AG04450 (cell line): ENCODE measurements at regions of chr4 and their contacts with region 1.

Region 1: DNA sequence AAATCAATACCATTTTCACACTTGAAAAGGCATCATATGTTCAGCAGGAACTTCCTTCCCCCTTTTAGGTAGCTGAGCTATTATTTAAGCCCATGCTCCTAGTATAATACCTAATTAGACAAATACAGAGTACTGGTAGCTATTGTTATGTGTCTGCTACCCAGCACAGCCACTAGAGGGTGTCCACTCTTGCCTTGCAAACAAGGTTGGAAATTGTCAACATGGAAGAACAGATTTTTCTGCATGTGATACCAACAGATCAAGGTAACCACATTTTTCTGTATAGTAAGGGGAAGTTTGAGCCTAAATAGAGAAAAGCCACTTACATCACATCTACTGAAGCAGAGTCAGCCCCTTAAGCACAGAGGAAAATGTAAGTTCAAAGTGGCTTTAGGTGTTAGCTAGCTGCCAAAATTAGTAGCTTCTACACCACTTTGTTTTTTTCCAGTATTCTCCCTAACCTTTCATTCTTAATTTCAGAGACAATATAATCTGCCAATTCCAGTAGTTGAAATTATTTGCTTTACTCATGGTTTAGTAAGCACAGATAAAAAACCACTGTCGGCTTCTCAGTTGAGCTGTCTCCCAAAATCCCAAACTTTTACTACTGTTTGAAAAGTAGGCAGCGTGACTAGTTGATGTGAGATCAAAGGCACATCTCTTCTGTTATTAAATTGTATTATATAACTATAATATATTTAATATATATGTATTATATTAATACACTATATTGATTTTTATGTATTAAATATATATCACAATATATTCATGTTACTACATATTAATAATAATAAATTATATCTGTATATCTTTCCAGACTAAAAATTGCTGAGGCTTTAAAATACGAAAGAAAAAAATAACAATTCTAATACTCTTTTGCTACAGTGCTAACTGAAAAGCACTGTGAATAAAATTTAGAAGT is 38.2 kb downstream of the EDNRA start:
- DNase-seq: peak; percentile 48
- H3K4me3 ChIP-seq: no peak overlapping the region
- H3K27ac ChIP-seq: no peak overlapping the region
- H3K27me3 ChIP-seq: no peaks in the 10 kb centered on the region
- CTCF ChIP-seq: peak; percentile 98

Region 2: DNA sequence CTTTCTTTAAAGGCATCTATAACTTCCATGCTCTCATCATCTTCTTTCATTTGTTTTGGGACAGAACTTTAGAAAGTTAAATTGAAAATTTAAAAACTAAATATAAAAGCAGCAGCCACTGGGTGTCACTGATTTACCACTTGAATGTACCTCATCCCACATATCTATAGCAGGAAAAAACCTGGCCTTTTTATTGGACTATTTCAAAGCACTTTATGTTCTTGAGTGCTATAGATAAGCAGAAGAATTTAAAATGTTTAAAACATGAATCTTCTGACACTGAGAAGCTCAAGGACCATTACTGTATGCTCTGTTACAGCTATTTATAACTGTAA is 408.1 kb before region 1 on chr4:
- CTCF ChIA-PET with region 1: interaction called, 14 read pairs
- POLR2A ChIA-PET with region 1: no interaction called
- DNase-seq: no peak
- H3K4me3 ChIP-seq: no peak overlapping the region
- H3K27ac ChIP-seq: no peak overlapping the region
- H3K27me3 ChIP-seq: no peaks in the 10 kb centered on the region
- CTCF ChIP-seq: no peak; the same call in 1 of the 2 replicates

Region 3: DNA sequence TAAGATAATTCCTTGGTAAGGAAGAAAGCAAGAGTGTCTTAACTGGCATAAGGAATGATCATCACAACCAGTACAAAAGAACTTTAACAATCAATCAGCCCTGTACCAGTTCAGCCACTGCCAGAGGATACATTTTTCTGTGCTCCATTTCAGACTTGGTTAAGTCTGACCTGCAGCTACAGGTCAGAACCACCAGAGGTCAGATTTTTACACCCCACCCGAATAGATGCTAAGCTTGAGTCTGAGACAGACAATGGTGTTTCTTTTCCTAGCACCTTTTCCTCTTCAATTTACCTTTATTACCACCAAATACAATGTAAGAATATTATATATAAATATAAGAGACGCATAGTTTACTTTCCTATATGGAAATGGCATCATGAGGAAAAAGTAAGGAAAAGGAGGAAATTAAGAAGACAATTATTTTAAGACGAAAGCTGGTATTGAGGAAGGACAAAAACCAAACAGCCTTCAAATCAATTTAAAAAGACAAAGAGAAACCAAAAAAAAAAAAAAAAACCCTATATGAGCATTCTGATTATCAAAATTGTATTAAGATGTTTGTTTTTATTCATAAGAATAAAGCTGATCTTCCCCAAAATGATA is 358.1 kb before region 1 on chr4:
- CTCF ChIA-PET with region 1: interaction called, 20 read pairs
- POLR2A ChIA-PET with region 1: no interaction called
- DNase-seq: peak; percentile 16
- H3K4me3 ChIP-seq: no peak overlapping the region
- H3K27ac ChIP-seq: no peak overlapping the region
- H3K27me3 ChIP-seq: no peaks in the 10 kb centered on the region
- CTCF ChIP-seq: peak; percentile 89

Region 4: DNA sequence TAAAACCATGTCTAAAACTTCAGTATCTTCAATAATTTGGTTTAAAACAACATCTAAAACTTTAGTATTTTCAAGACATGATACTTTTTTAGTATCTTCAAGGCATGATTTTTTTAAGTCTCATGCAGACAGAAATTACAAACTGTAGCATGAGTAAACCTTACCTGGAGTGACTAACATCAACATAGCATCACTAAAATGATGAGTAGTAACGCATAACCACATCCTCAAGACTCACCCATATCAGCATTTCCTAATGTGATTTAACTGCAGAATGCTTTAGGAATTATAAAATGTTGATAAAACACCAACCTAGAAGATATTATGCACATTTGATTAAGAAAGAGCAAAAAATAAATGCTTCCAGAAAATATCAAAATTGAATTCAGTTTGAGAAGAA is 57.9 kb before region 1 on chr4:
- CTCF ChIA-PET with region 1: no interaction called
- POLR2A ChIA-PET with region 1: no interaction called
- DNase-seq: no peak
- H3K4me3 ChIP-seq: no peak overlapping the region
- H3K27ac ChIP-seq: no peak overlapping the region
- H3K27me3 ChIP-seq: no peaks in the 10 kb centered on the region
- CTCF ChIP-seq: no peak

Region 5: GRCh38 chr4:147498031-147498660 is 21.0 kb before region 1 on chr4:
- CTCF ChIA-PET with region 1: interaction called, 22 read pairs
- POLR2A ChIA-PET with region 1: no interaction called
- DNase-seq: peak; percentile 55
- H3K4me3 ChIP-seq: no peak overlapping the region
- H3K27ac ChIP-seq: peak overlapping the region; percentile 85
- H3K27me3 ChIP-seq: no peaks in the 10 kb centered on the region
- CTCF ChIP-seq: no peak

Region 6: GRCh38 chr4:147533331-147533730 is 14.2 kb after region 1 on chr4:
- CTCF ChIA-PET with region 1: interaction called, 28 read pairs
- POLR2A ChIA-PET with region 1: no interaction called
- DNase-seq: no peak
- H3K4me3 ChIP-seq: no peak overlapping the region
- H3K27ac ChIP-seq: no peak overlapping the region
- H3K27me3 ChIP-seq: no peaks in the 10 kb centered on the region
- CTCF ChIP-seq: no peak

Region 7: DNA sequence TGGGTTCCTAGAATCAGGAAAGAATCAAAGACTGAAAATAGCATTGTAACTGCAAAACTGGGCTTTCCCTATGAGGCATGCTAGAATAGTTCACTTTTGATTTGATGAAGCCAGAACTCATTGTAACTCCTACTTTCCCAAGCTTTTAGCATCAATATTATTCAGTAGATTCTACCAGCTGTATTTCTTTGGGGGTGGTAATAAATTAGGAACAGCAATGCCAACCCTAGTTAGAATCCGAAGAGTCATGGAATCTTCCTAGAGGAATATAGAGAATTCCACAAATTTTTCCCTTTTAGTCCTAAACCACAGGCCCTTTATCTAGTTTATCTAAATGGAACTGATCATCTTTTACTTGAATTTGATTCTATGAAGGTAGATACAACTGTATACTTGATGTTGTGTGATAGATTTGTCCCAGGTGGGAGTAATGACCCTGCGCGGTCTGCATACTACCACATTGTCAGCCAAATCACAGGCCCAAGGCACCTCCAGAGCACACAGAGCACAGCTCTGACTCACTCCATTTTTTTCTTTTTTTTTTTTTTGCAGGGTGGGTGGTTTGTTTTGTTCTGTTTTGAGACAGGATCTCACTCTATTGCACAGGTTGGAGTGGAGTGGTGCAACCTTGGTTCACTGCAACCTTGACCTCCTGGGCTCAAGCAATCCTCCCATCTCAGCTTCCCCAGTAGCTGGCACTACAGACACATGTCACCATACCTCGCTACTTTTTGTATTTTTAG is 28.4 kb after region 1 on chr4:
- CTCF ChIA-PET with region 1: interaction called, 15 read pairs
- POLR2A ChIA-PET with region 1: interaction called, 3 read pairs
- DNase-seq: no peak
- H3K4me3 ChIP-seq: no peak overlapping the region
- H3K27ac ChIP-seq: peak overlapping the region; percentile 86
- H3K27me3 ChIP-seq: no peaks in the 10 kb centered on the region
- CTCF ChIP-seq: no peak

Region 8: DNA sequence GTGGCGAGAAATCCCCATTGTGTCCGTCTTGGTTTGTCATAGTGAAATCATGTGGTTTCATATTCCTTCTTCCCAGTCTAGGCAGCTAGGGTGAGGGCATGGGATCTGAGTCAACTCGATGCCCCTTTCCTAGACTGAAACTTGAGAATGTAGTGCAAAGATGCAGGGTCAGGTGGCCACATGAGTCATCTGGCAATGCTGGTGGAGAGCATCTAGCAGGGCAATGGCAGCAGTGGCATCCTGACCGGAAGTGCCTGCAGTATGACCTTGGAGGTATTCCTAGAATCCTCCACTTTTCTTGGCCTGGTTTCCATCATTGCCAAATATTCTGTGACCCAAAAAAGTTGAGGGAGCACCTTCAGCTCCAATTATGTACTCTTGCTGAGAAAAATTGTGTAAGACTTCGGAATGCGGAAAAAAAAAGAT is 59.0 kb after region 1 on chr4:
- CTCF ChIA-PET with region 1: interaction called, 18 read pairs
- POLR2A ChIA-PET with region 1: no interaction called
- DNase-seq: peak; percentile 86
- H3K4me3 ChIP-seq: no peak overlapping the region
- H3K27ac ChIP-seq: no peak overlapping the region
- H3K27me3 ChIP-seq: no peaks in the 10 kb centered on the region
- CTCF ChIP-seq: no peak

Region 9: DNA sequence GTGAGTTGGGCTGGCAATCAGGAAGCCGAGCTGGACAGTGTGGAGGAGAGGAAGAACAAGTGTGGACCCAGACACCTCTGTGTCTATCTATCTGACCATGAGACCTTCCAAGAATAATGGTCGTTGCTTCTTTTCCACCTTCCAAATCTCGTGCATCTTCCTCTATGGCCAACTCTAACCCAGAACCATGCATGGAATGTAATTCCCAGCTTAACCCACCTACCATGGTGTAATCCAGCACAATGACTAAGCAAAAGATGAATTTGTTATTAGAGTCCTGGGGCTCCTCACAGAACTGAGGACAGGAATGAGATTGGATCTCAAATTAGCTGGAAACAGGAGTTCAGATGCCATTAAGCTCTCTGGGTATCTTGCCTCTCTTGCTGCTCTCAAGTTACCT is 80.7 kb after region 1 on chr4:
- CTCF ChIA-PET with region 1: no interaction called
- POLR2A ChIA-PET with region 1: no interaction called
- DNase-seq: peak; percentile 47
- H3K4me3 ChIP-seq: no peak overlapping the region
- H3K27ac ChIP-seq: peak overlapping the region; percentile 78
- H3K27me3 ChIP-seq: no peaks in the 10 kb centered on the region
- CTCF ChIP-seq: no peak